Esophagus muscularis mucosa (tissue), 4 donors: ENCODE measurements at regions of chr22 and their contacts with region 1.

Region 1: DNA sequence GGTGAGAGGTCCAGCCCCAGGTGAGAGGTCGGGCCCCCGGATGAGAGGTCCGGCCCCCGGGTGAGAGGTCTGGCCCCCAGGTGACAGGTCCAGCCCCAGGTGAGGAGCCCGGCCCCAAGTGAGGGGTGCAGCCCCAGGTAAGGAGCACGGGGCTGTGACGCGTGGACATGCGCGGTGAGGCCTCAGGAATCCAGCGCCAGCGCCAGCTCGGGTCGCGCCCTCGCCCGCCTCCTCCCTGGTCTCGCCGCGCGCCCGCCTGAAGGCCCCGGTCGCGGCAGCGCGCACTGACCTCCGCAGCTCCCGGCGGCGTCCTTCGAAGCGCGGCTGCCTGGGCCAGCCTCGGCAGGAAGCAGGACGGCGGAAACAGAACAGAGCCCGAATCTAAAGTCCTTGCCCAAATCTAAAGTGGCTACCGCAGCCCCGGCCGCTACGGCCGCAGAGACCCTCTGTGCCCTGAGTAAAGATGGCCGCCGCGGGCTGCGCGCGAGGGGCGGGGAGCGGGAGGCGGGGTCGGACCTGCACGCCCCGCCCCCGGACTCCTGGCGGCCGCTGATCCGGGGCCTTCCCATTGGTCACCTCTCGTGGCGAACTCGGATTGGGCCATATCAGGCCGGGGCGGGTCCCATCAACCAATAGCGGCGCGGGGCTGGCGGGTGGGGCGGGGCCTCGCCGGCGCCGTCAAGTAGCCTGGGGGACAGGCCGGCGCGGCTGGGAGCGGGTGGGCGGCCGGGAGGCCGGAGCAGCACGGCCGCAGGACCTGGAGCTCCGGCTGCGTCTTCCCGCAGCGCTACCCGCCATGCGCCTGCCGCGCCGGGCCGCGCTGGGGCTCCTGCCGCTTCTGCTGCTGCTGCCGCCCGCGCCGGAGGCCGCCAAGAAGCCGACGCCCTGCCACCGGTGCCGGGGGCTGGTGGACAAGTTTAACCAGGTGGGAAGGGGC is at the starts of genes ALG12 and CRELD2:
- DNase-seq: peak; percentile 100
- H3K4me3 ChIP-seq: peak within 1 kb of the TSS; percentile 85 to 97 (median 88)
- H3K27ac ChIP-seq: peak within 1 kb of the TSS; percentile 92 to 96 (median 95)
- H3K4me1 ChIP-seq: peaks cover 15 to 47% (median 34%) of the 10 kb centered on the region in 4 donors
- H3K27me3 ChIP-seq: no peaks in the 10 kb centered on the region
- CTCF ChIP-seq: peak in 1 of 3 experiments; percentile 2
- EP300 ChIP-seq: no peak
- POLR2A ChIP-seq: peak; percentile 27
- total RNA-seq, gene ALG12: 17.7 to 28.0 (median 23.8) TPM
- total RNA-seq, gene CRELD2: 32.0 to 38.2 (median 34.2) TPM

Region 2: DNA sequence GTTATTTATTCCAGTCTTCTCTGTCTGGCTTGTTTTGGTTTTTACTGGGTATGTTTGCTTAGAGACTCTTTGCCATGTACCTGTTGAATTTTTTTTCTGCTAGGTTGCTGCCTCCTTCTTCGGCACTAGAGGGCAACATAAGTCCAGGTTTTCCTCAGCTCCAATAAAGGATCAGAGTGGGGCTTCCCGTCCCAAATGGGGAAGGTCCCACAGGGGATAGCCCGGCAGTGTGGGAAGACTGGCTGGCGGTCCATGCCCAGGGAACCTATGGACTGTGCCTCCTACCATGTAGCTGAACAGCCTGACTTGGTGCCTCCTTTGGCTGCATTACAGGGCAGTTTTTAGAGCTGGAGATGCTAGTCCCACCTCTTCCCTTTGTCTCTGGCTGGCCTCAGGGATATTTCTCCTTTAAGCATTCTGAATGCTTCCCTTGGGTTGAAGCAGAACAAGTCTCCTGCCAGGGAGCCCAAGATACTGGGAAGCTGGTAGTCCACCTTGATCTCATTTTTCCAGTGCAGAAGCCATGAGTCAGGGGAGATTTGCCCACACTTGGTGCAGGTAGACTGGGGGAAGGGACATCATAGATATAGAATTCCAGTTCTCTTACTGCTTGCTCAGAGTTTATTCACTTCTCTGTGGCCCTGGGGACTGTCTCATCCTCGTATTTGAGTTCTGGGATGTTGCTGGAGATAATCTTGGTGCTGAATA is 150.7 kb before region 1 on chr22:
- intact Hi-C with region 1: loop called (anchors 5 kb)
- DNase-seq: no peak
- H3K4me3 ChIP-seq: no peak overlapping the region
- H3K27ac ChIP-seq: no peak overlapping the region
- H3K4me1 ChIP-seq: peaks cover 0 to 17% (median 12%) of the 10 kb centered on the region in 4 donors
- H3K27me3 ChIP-seq: no peaks in the 10 kb centered on the region
- CTCF ChIP-seq: peak; percentile 46 to 74 (median 59)
- EP300 ChIP-seq: no peak
- POLR2A ChIP-seq: no peak

Region 3: DNA sequence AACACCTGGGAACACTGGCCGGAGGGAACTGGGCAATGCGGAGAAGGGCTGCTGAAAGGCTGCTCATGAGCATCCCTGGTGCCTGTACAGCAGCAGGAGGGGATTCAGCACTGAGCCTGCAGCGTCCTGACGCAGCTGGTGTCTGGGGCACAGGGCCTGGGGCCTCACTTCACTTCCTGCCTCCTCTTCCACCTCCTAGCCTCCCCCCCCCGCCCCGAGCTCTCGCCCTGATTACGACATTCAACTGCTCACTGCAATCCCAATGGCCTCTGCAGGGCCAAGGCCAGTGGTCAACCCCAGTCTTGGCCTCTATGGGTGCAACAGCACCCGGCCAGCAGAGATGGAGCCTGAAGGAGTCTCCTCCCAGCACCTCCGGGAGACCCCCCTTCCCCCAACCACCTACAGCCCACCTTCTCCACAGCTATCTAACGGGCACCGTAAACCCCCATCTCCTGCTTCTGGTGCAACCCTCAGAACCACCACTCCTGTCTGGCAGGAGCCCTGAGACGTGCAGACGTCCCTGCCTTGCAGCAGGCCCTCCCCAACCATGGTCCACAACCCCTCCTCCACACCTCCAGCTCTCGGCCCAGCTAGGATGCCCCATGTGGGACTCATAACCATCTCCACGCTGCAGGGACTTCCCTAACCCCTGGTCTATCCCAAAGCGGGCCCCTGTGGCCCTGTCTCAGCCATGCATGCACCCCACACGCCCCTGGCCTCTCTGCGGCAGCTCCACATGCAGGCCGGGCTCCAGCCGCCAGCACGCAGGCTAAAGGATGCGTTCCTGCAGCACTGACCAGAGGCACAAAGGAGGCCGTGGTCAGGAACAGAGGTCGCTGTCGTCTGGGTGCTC is 128.7 kb before region 1 on chr22:
- intact Hi-C with region 1: loop called (anchors 5 kb)
- DNase-seq: no peak
- H3K4me3 ChIP-seq: peak overlapping the region in 1 of 4 donors; percentile 42
- H3K27ac ChIP-seq: peak overlapping the region; percentile 34 to 73 (median 68)
- H3K4me1 ChIP-seq: peaks cover 68 to 100% (median 92%) of the 10 kb centered on the region in 4 donors
- H3K27me3 ChIP-seq: no peaks in the 10 kb centered on the region
- CTCF ChIP-seq: no peak
- EP300 ChIP-seq: no peak
- POLR2A ChIP-seq: no peak

Region 4: GRCh38 chr22:49852898-49853894 is 65.0 kb before region 1 on chr22 and contains the start of gene ZBED4:
- intact Hi-C with region 1: loop called (anchors 2 kb)
- DNase-seq: peak; percentile 98
- H3K4me3 ChIP-seq: peak within 1 kb of the TSS; percentile 81 to 84 (median 84)
- H3K27ac ChIP-seq: peak within 1 kb of the TSS; percentile 91 to 95 (median 92)
- H3K4me1 ChIP-seq: peaks cover 37 to 52% (median 51%) of the 10 kb centered on the region in 4 donors
- H3K27me3 ChIP-seq: peaks cover 13 to 27% (median 24%) of the 10 kb centered on the region in 4 donors
- CTCF ChIP-seq: no peak
- EP300 ChIP-seq: no peak
- POLR2A ChIP-seq: peak; percentile 50
- total RNA-seq, gene ZBED4: 6.6 to 11.1 (median 9.5) TPM

Region 5: DNA sequence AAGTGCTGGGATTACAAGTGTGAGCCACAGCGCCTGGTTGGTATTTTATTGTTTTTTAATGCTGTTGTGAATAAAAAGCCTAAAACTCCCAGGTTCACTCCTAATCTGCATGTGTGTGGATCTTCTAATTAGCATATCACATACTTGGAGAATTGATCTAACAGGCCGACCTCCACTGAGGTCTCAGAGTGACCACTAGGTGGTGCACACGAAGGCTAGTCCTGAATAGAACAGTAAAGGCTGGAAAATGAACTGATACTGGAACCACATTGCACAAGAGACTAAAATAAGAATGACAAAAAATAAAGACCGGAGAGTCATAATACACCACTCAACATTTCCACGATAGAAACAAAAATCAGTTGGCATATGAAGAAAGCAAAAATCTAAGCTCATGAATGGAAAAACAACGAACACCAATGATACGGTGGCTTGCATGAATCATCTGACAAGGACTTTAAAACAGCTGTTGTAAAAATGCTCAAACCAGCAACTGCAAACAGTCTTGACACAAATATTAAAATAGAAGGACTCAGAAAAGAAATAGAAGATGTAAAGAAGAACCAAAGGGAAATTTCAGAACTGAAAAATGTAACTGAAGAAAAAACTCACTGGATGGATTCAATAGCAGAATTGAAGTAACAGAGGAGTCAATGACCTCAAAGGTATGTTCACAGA is 61.5 kb after region 1 on chr22:
- intact Hi-C with region 1: no loop called
- DNase-seq: no peak
- H3K4me3 ChIP-seq: no peak overlapping the region
- H3K27ac ChIP-seq: no peak overlapping the region
- H3K4me1 ChIP-seq: peaks cover 11 to 19% (median 13%) of the 10 kb centered on the region in 4 donors
- H3K27me3 ChIP-seq: peaks cover 0 to 39% (median 22%) of the 10 kb centered on the region in 4 donors
- CTCF ChIP-seq: peak; percentile 28 to 58 (median 46)
- EP300 ChIP-seq: no peak
- POLR2A ChIP-seq: no peak